Left cardiac atrium (tissue), 4 donors: ENCODE measurements at regions of chr20 and their contacts with region 1.

Region 1: DNA sequence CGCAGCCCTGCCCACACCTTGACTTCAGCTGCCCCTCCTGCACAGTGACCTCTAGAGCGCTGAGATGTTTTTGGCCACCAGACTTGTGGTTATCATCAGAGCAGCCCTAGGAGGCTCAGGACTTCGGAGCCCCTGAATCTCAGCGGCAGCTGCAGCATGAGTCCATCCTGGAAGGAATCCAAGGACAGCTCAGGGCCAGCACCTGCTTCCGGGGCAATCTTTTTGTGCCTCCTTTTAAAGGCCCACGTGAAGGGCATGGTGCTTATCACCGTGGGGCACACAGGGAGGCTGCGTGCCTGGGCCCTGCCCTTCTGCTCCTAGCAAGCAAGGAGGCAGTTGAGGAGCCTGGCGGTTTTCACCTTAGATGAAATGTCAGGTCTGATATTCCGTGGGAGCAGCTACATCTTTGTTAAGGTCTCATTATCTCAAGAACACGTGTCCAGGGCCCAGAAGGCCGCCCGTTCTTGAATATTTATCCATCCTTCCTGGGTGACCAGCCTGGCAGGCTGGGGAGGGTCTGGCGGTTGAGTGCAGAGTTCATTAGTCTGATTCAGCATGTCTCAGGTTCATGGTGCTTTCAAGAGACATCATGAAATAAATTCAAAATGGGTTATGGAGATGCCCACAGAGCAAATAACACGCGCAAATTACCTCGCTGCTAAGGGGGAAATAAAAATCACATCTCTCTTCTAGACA is 392.4 kb downstream of the TAF4 start:
- DNase-seq: no peak
- ATAC-seq: no peak

Region 2: GRCh38 chr20:61297986-61298385 is 375.3 kb before region 1 on chr20:
- intact Hi-C with region 1: no loop called
- DNase-seq: no peak
- ATAC-seq: no peak

Region 3: GRCh38 chr20:61628901-61629601 is 44.2 kb before region 1 on chr20:
- intact Hi-C with region 1: loop called in 1 of 2 experiments (anchors 10 kb)
- DNase-seq: peak; percentile 9
- ATAC-seq: peak in 1 of 2 donors; percentile 11

Region 4: DNA sequence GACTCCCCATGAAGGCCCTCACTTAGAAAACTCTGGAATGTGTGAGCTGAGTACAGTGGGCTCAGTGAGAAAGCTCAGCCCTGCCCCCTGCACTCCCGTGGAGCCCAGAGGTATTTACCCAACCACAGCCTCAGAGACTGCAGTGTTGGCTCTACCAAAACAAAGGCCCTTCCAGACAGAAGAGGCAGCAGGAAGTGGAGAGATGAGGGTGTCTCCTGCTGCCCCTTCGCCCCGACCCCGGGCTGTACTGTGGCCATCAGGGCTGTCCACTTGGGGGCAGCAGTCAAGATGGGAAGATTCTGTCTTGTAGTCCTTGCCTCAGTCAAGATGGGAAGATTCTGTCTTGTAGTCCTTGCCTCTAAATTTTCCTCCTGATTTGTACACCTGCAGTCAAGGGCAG is 51.1 kb after region 1 on chr20:
- intact Hi-C with region 1: no loop called
- DNase-seq: no peak
- ATAC-seq: no peak